H1 (cell line): ENCODE measurements at regions of chr10 and their contacts with region 1.

Region 1: DNA sequence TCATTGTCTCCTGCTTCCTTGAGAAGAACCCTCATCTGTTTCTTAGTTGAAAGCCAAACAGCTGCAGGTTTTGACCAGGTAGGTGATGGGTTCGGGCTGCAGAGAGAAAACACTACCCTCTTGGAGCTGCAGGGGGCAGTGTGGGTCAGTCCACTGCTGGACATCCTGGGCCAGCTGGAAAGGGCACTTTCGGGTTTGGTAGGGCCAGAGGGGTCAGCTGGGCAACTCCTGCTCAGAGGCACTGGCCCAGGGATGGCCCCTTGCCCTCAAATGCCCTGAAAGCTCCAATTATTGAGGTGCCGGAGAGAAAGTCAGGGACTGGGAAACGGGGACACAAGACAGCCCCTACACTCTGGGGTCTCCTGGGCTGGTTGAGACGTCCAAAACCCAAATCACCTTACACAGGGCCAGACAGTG is 90.7 kb downstream of the MKI67 start:
- DNase-seq: peak; percentile 23 to 95
- H3K4me3 ChIP-seq: no peak overlapping the region
- H3K27ac ChIP-seq: no peak overlapping the region
- H3K4me1 ChIP-seq: no peaks in the 10 kb centered on the region
- H3K27me3 ChIP-seq: no peaks in the 10 kb centered on the region
- CTCF ChIP-seq: peak; percentile 75 to 93 (median 90)
- EP300 ChIP-seq: no peak
- POLR2A ChIP-seq: no peak
- RAD21 ChIP-seq: peak; percentile 63 to 80

Region 2: GRCh38 chr10:128047351-128047750 is 11.8 kb after region 1 on chr10:
- CTCF ChIA-PET with region 1: interaction called, 57 read pairs
- POLR2A ChIA-PET with region 1: no interaction called
- DNase-seq: peak; percentile 15 to 71
- H3K4me3 ChIP-seq: no peak overlapping the region
- H3K27ac ChIP-seq: no peak overlapping the region
- H3K4me1 ChIP-seq: peaks cover 0 to 2% (median 0%) of the 10 kb centered on the region in 4 experiments; a peak in 2 of 7 replicates
- H3K27me3 ChIP-seq: no peaks in the 10 kb centered on the region
- CTCF ChIP-seq: no peak
- EP300 ChIP-seq: no peak; a peak in 1 of 3 replicates
- POLR2A ChIP-seq: peak in 1 of 2 experiments; percentile 40; a peak in 1 of 3 replicates
- RAD21 ChIP-seq: no peak

Region 3: GRCh38 chr10:128064108-128064969 is 28.8 kb after region 1 on chr10:
- CTCF ChIA-PET with region 1: interaction called, 52 read pairs
- POLR2A ChIA-PET with region 1: no interaction called
- DNase-seq: no peak
- H3K4me3 ChIP-seq: no peak overlapping the region
- H3K27ac ChIP-seq: no peak overlapping the region
- H3K4me1 ChIP-seq: peaks cover 9 to 21% (median 15%) of the 10 kb centered on the region in 4 experiments
- H3K27me3 ChIP-seq: no peaks in the 10 kb centered on the region
- CTCF ChIP-seq: no peak
- EP300 ChIP-seq: no peak
- POLR2A ChIP-seq: no peak
- RAD21 ChIP-seq: no peak